CD4-positive, alpha-beta memory T cell (primary cell): ENCODE measurements at regions of chr14 and their contacts with region 1.

Region 1: DNA sequence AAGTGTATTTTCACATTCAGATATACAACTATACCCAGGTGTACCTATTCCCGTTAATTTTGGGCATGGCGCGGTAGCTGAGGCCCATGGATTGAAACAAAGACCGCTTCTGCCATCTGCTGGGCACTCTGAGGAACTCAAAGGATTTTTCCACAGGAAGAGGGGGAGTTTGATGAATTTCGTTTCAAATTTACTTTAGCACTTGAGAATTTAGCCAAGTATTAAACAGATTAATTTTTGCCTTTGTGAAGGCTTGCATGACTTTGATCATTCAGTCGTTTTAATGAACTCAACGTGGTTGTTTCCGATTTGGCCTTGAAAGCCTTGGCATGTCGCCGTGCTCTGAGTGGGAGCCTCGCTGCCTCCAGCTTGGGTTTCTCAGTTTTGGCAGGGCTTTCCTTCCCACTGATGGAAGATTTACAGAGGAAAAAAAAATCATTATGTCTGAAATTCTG is 153.2 kb upstream of the DDHD1 start:
- DNase-seq: peak in 4 of 5 donors; percentile 16 to 27 (median 22)
- H3K4me3 ChIP-seq: no peak overlapping the region
- H3K4me3 Mint-ChIP-seq: peak overlapping the region; percentile 5 to 83 (median 52)
- H3K27ac ChIP-seq: no peak overlapping the region
- H3K27ac Mint-ChIP-seq: peak overlapping the region in 1 of 7 donors; percentile 25
- H3K4me1 ChIP-seq: peaks cover 9% of the 10 kb centered on the region
- H3K4me1 Mint-ChIP-seq: peaks cover 2 to 7% (median 5%) of the 10 kb centered on the region in 4 donors
- H3K27me3 ChIP-seq: no peaks in the 10 kb centered on the region
- H3K27me3 Mint-ChIP-seq: peaks cover 0 to 1% of the 10 kb centered on the region in 2 donors

Region 2: DNA sequence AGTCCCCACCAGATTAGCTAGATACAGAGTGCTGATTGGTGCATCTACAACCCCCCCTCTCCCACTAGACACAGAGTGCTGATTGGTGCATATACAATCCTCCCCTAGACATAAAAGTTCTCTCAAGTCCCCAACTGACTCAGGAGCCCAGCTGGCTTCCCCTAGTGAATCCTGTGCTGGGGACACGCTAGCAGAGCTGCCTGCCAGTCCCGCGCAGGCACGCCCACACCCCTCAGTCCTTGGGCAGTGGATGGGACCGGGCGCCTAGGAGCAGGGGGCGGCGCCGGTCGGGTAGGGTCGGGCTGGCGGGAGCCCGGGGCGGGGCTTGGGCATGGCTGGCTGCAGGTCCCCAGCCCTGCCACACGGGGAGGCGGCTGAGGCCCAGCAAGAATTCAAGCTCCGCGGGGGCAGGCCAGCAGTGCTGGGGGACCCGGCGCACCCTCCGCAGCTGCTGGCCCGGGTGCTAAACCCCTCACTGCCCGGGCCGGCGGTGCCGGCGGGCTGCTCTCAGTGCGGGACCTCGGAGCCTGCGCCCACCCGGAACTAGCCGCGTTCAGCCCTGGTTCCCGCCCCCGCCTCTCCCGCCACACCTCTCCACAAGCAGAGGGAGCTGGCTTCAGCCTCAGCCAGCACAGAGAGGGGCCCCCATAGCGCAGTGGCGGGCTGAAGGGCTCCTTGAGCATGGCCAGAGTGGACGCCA is 88.8 kb before region 1 on chr14:
- CTCF ChIA-PET with region 1: interaction called, 10 read pairs
- POLR2A ChIA-PET with region 1: no interaction called
- intact Hi-C with region 1: no loop called
- DNase-seq: peak; percentile 65 to 77 (median 71)
- H3K4me3 ChIP-seq: peak overlapping the region; percentile 32 to 58
- H3K4me3 Mint-ChIP-seq: peak overlapping the region; percentile 88 to 93 (median 89)
- H3K27ac ChIP-seq: peak overlapping the region; percentile 40
- H3K27ac Mint-ChIP-seq: peak overlapping the region; percentile 14 to 83 (median 56)
- H3K4me1 ChIP-seq: peaks cover 4% of the 10 kb centered on the region
- H3K4me1 Mint-ChIP-seq: peaks cover 5 to 13% (median 9%) of the 10 kb centered on the region in 4 donors
- H3K27me3 ChIP-seq: no peaks in the 10 kb centered on the region
- H3K27me3 Mint-ChIP-seq: no peaks in the 10 kb centered on the region

Region 3: GRCh38 chr14:53247596-53248370 is 58.5 kb before region 1 on chr14:
- CTCF ChIA-PET with region 1: no interaction called
- POLR2A ChIA-PET with region 1: no interaction called
- intact Hi-C with region 1: no loop called
- DNase-seq: no peak
- H3K4me3 ChIP-seq: no peak overlapping the region
- H3K4me3 Mint-ChIP-seq: no peak overlapping the region
- H3K27ac ChIP-seq: no peak overlapping the region
- H3K27ac Mint-ChIP-seq: no peak overlapping the region
- H3K4me1 ChIP-seq: no peaks in the 10 kb centered on the region
- H3K4me1 Mint-ChIP-seq: no peaks in the 10 kb centered on the region
- H3K27me3 ChIP-seq: no peaks in the 10 kb centered on the region
- H3K27me3 Mint-ChIP-seq: no peaks in the 10 kb centered on the region

Region 4: DNA sequence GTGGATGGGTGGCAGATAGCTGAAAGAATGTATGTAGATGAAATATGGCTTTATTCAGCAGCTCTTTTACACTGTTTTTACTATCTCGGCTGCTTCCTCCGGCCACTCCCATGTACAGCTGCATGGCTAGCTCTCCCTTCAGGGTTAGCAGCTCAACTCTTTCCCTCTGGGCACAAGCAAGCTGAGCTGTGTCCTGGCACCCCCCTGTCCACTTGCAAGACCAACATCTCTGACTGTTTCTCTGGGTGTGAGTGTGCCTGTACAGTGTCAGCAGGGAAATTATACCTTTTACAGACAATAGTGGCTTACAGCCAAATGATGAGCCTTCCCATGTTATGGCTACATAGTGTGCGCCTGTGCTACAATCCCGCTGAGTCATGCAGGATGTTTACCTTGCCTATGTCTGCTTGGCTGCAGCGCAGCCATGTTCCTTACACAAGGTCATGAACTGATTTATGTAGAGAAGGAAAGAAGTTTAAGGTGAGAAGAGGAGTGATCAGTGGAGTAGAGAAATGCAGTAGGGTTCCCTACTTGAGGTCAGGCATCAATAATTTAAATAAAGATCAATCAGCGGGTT is 27.3 kb before region 1 on chr14:
- CTCF ChIA-PET with region 1: no interaction called
- POLR2A ChIA-PET with region 1: no interaction called
- intact Hi-C with region 1: no loop called
- DNase-seq: no peak
- H3K4me3 ChIP-seq: no peak overlapping the region
- H3K4me3 Mint-ChIP-seq: no peak overlapping the region
- H3K27ac ChIP-seq: no peak overlapping the region
- H3K27ac Mint-ChIP-seq: no peak overlapping the region
- H3K4me1 ChIP-seq: no peaks in the 10 kb centered on the region
- H3K4me1 Mint-ChIP-seq: no peaks in the 10 kb centered on the region
- H3K27me3 ChIP-seq: no peaks in the 10 kb centered on the region
- H3K27me3 Mint-ChIP-seq: no peaks in the 10 kb centered on the region

Region 5: DNA sequence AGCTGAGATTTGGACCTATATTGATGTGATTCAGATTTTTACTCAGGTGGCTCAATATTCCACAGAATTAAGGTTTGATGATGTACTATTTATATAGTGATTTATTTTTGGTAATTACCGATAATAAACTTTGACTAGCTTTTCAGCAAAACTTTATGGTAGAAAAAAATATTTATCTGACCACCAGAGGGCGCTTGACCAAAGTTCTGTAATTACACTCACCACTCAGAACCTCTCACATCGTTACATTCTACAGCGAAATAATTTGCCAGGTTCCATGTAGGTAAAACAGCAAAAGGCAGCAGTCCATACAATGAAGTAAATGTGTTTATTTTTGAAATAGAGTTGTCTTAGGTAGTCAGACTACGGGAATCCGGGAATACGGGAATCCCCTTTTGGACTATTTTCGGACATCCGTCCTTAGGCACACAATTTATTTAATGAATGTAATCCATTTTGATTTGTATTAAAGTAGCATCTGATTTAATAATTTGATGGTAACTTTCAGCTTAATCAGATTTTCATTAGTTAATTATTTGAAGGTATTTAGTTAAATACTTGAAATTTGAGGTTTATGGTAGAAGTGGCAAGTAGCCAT is 10.2 kb before region 1 on chr14:
- CTCF ChIA-PET with region 1: interaction called, 35 read pairs
- POLR2A ChIA-PET with region 1: no interaction called
- intact Hi-C with region 1: no loop called
- DNase-seq: peak in 4 of 5 donors; percentile 35 to 39 (median 37)
- H3K4me3 ChIP-seq: no peak overlapping the region
- H3K4me3 Mint-ChIP-seq: no peak overlapping the region
- H3K27ac ChIP-seq: no peak overlapping the region
- H3K27ac Mint-ChIP-seq: no peak overlapping the region
- H3K4me1 ChIP-seq: no peaks in the 10 kb centered on the region
- H3K4me1 Mint-ChIP-seq: no peaks in the 10 kb centered on the region
- H3K27me3 ChIP-seq: no peaks in the 10 kb centered on the region
- H3K27me3 Mint-ChIP-seq: no peaks in the 10 kb centered on the region

Region 6: DNA sequence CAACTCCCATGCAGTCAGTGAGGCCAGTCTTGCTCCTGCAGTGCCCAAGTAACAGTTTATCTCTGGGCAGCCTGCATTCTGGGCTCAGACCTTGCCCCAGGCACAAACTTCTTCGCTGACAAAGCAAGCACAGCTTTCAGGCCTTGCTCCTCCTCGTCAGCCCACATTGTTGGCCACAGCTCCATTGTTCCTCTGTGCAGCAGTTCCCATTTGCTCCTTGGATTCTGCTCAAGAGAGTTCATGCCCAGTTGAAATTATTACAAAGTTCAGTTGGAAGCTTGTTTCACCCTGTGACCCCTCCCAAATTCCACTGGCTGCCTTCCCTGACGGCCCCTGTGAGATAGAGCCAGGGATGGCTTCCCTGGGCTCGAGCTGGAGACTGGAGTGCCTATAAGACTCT is 10.2 kb after region 1 on chr14:
- CTCF ChIA-PET with region 1: interaction called, 11 read pairs
- POLR2A ChIA-PET with region 1: no interaction called
- intact Hi-C with region 1: no loop called
- DNase-seq: no peak
- H3K4me3 ChIP-seq: no peak overlapping the region
- H3K4me3 Mint-ChIP-seq: no peak overlapping the region
- H3K27ac ChIP-seq: no peak overlapping the region
- H3K27ac Mint-ChIP-seq: no peak overlapping the region
- H3K4me1 ChIP-seq: no peaks in the 10 kb centered on the region
- H3K4me1 Mint-ChIP-seq: no peaks in the 10 kb centered on the region
- H3K27me3 ChIP-seq: no peaks in the 10 kb centered on the region
- H3K27me3 Mint-ChIP-seq: no peaks in the 10 kb centered on the region

Region 7: DNA sequence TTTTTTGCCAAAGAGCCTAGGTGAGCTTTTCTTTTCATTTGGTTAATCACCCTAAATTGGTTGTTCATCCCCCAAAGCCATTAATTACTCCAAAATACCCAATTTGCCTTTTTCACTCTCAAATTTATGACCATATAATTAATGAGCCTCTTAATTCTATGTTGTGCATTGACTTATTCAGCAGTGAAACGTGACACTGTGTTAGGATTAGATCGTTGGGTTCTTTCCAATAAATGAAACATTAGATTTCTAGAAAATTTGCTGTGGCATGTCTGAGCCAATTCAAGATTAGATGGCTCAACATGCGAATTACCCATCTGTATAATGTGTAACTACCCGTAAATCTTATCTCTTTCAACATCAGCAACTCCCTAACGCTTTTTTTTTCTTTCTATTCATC is 376.9 kb after region 1 on chr14:
- CTCF ChIA-PET with region 1: no interaction called
- POLR2A ChIA-PET with region 1: no interaction called
- intact Hi-C with region 1: no loop called
- DNase-seq: no peak
- H3K4me3 ChIP-seq: no peak overlapping the region
- H3K4me3 Mint-ChIP-seq: no peak overlapping the region
- H3K27ac ChIP-seq: no peak overlapping the region
- H3K27ac Mint-ChIP-seq: no peak overlapping the region
- H3K4me1 ChIP-seq: no peaks in the 10 kb centered on the region
- H3K4me1 Mint-ChIP-seq: no peaks in the 10 kb centered on the region
- H3K27me3 ChIP-seq: no peaks in the 10 kb centered on the region
- H3K27me3 Mint-ChIP-seq: no peaks in the 10 kb centered on the region